Adrenal gland (tissue), 19 donors: ENCODE measurements at regions of chr12 and their contacts with region 1.

Region 1: GRCh38 chr12:97308576-97309198 is 153.9 kb upstream of the RMST start:
- DNase-seq: peak in 3 of 7 donors; percentile 7 to 15 (median 8)
- H3K4me3 ChIP-seq: no peak overlapping the region
- H3K27ac ChIP-seq: no peak overlapping the region
- H3K4me1 ChIP-seq: no peaks in the 10 kb centered on the region
- H3K27me3 ChIP-seq: peaks cover 5% of the 10 kb centered on the region
- CTCF ChIP-seq: peak; percentile 41 to 82 (median 67)
- POLR2A ChIP-seq: no peak

Region 2: GRCh38 chr12:96578526-96579125 is 730.1 kb before region 1 on chr12:
- intact Hi-C with region 1: loop called in 1 of 2 experiments (anchors 5 kb)
- DNase-seq: no peak
- H3K4me3 ChIP-seq: no peak overlapping the region
- H3K27ac ChIP-seq: no peak overlapping the region
- H3K4me1 ChIP-seq: no peaks in the 10 kb centered on the region
- H3K27me3 ChIP-seq: no peaks in the 10 kb centered on the region
- CTCF ChIP-seq: peak; percentile 28 to 68 (median 54)
- POLR2A ChIP-seq: no peak

Region 3: DNA sequence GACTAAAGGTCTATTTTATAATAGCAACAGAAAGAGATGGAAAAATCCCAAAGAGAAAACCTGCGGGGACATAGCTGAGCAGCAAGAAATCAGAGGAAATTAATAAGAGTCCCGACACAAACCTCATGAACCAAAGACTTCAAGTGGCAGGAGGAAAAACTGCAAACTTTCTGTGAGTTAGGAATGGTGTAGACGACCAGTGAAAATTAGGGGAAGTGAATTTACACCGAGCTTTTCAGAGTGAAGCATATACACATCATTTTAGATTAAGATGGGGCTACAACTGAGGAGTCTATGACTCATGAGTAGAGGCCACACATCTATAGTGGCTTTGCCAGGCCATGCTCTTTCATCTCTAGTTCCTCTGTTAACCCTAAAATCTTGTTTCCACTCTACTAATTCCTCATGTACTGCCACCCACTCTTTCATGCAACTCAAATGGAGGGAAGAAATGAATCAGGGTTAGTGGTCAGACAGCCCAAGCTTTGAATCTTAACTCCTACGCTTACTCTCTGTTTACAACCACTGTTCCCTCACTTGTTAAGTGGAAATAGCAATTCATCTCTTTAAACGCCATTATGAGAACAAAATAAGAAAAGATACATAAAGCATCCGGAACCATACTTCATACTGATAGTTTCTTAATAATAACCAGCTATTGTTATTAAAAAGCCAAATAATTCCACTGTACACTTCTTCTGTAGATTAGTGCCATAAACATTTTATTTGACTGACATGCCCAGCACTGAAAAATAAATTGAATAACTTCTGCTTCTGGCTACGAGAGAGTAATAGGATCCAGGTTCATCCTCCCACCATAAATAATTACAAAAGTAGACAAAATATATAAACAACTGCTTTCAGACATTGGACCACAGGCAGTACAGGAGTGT is 373.2 kb after region 1 on chr12:
- intact Hi-C with region 1: no loop called
- DNase-seq: no peak
- H3K4me3 ChIP-seq: no peak overlapping the region
- H3K27ac ChIP-seq: no peak overlapping the region
- H3K4me1 ChIP-seq: no peaks in the 10 kb centered on the region
- H3K27me3 ChIP-seq: no peaks in the 10 kb centered on the region
- CTCF ChIP-seq: no peak
- POLR2A ChIP-seq: no peak